ENCODE measurements at regions of chr6 and their contacts with region 1.

Region 1: GRCh38 chr6:89819336-89820130 is at the start of gene MDN1:
- DNase-seq: peak; percentile 94
- ATAC-seq: peak; percentile 94
- H3K4me3 Mint-ChIP-seq: peak within 1 kb of the TSS; percentile 81
- H3K27ac Mint-ChIP-seq: peak within 1 kb of the TSS; percentile 96
- H3K4me1 Mint-ChIP-seq: peaks cover 22% of the 10 kb centered on the region
- H3K27me3 Mint-ChIP-seq: no peaks in the 10 kb centered on the region
- total RNA-seq, gene MDN1: 48.6 to 59.5 TPM

Region 2: GRCh38 chr6:89412071-89413005 is 407.2 kb before region 1 on chr6 and contains the start of gene RRAGD:
- CTCF ChIA-PET with region 1: no interaction called
- POLR2A ChIA-PET with region 1: no interaction called
- intact Hi-C with region 1: loop called in 1 of 2 experiments (anchors 5 kb)
- DNase-seq: peak; percentile 83
- ATAC-seq: peak; percentile 80
- H3K4me3 Mint-ChIP-seq: peak within 1 kb of the TSS; percentile 83
- H3K27ac Mint-ChIP-seq: peak within 1 kb of the TSS; percentile 85
- H3K4me1 Mint-ChIP-seq: peaks cover 20% of the 10 kb centered on the region
- H3K27me3 Mint-ChIP-seq: peaks cover 3% of the 10 kb centered on the region
- total RNA-seq, gene RRAGD: 19.6 to 20.1 TPM

Region 3: GRCh38 chr6:89829591-89830385 is 10.3 kb after region 1 on chr6 and contains the start of gene CASP8AP2:
- CTCF ChIA-PET with region 1: interaction called, 17 read pairs
- POLR2A ChIA-PET with region 1: interaction called, 47 read pairs
- intact Hi-C with region 1: loop called (anchors 1 kb)
- DNase-seq: peak; percentile 98
- ATAC-seq: peak; percentile 96
- H3K4me3 Mint-ChIP-seq: peak within 1 kb of the TSS; percentile 97
- H3K27ac Mint-ChIP-seq: peak within 1 kb of the TSS; percentile 92
- H3K4me1 Mint-ChIP-seq: peaks cover 33% of the 10 kb centered on the region
- H3K27me3 Mint-ChIP-seq: no peaks in the 10 kb centered on the region
- total RNA-seq, gene CASP8AP2: 34.0 to 36.5 TPM

Region 4: DNA sequence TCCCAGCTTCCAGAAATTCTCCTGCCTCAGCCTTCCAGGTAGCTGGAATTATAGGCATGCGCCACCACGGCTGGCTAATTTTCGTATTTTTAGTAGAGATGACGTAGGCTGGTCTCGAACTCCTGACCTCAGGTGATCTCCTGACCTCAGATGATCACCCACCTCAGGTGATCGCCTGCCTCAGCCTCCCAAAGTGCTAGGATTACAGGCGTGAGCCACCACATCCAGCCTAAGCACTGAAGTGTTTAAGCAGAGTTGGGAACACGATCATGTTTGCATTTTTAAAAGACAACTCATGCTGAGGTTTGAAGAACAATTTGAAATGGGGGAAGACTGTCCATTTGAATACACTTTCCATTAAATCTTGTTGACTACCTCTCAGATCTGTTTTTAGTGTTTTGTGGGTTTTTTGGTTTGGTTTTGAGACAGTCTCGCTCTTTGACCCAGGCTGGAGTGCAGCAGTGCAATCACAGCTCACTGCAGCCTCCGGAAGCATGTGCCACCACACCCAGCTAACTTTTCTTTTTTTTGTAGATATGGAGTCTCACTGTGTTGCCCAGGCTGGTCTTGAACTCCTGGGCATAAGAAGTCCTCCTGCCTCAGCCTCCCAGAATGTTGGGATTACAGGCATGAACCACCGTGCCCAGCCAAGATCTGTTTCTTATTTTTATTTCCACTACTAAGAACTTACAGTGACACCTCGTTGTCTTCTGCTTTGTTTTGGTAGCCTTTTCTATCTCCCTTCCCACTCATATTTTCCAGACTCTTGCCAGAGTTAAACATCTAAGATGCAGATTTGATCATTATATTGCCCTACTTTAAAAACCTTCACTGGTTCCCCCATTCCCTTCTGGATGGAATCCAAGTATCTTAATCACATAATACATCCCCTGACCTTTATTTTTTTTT is 15.6 kb after region 1 on chr6:
- CTCF ChIA-PET with region 1: interaction called, 3 read pairs
- POLR2A ChIA-PET with region 1: interaction called, 6 read pairs
- intact Hi-C with region 1: loop called in 1 of 2 experiments (anchors 2 kb)
- DNase-seq: peak; percentile 67
- ATAC-seq: peak; percentile 94
- H3K4me3 Mint-ChIP-seq: peak overlapping the region; percentile 45
- H3K27ac Mint-ChIP-seq: peak overlapping the region; percentile 89
- H3K4me1 Mint-ChIP-seq: peaks cover 60% of the 10 kb centered on the region
- H3K27me3 Mint-ChIP-seq: no peaks in the 10 kb centered on the region

Region 5: DNA sequence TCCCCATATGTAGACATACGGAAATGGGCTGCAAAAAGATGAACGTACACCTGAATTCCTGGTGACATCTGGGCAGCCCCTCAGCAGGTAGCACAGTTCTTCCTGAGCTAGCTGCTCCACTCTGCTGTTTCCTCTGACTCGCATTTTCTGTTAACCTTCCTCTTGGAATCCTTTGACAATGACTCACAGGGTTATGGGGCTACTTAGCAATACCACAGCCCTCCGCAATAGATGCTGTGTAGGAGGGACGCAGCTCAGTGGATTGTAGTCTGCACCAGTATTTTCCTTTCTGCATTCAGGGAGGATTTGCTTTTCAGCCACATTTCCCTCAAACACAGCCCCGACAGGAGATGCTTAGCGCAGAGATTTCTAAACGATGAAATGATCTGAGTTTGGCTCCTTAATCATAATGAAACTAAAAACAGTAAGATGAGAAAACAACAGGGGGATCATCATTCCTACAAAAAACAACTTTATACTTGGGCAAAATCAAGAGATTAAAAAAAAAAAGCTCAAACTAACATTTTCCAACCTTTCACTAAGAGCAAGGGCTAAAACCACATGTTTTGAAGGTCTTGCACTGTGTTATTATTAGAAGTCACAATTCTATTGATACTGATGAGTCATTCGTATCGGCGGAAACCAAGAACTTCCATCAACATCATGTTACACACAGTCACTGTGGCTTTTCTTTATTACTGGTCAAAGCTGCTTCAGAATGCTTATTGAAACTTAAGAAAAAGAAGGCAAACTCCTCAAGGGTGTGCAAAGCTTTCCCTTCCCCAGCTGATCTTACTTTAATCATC is 464.9 kb after region 1 on chr6:
- CTCF ChIA-PET with region 1: no interaction called
- POLR2A ChIA-PET with region 1: no interaction called
- intact Hi-C with region 1: no loop called
- DNase-seq: peak; percentile 76
- ATAC-seq: peak; percentile 67
- H3K4me3 Mint-ChIP-seq: peak overlapping the region; percentile 62
- H3K27ac Mint-ChIP-seq: peak overlapping the region; percentile 95
- H3K4me1 Mint-ChIP-seq: peaks cover 89% of the 10 kb centered on the region
- H3K27me3 Mint-ChIP-seq: no peaks in the 10 kb centered on the region

Region 6: GRCh38 chr6:90296346-90297114 is 477.0 kb after region 1 on chr6 and contains the start of gene BACH2:
- CTCF ChIA-PET with region 1: no interaction called
- POLR2A ChIA-PET with region 1: no interaction called
- intact Hi-C with region 1: loop called in 1 of 2 experiments (anchors 1 kb)
- DNase-seq: peak; percentile 99
- ATAC-seq: peak; percentile 66
- H3K4me3 Mint-ChIP-seq: peak within 1 kb of the TSS; percentile 86
- H3K27ac Mint-ChIP-seq: peak within 1 kb of the TSS; percentile 100
- H3K4me1 Mint-ChIP-seq: peaks cover 49% of the 10 kb centered on the region
- H3K27me3 Mint-ChIP-seq: peaks cover 7% of the 10 kb centered on the region
- total RNA-seq, gene BACH2: 74.7 to 87.3 TPM